CD8-positive, alpha-beta memory T cell (primary cell): ENCODE measurements at regions of chr17 and their contacts with region 1.

Region 1: GRCh38 chr17:66630379-66630778 is 204.5 kb upstream of the CACNG5 start:
- DNase-seq: no peak
- H3K4me3 ChIP-seq: no peak overlapping the region
- H3K4me3 Mint-ChIP-seq: no peak overlapping the region
- H3K27ac ChIP-seq: no peak overlapping the region
- H3K27ac Mint-ChIP-seq: no peak overlapping the region
- H3K4me1 ChIP-seq: peaks cover 22% of the 10 kb centered on the region
- H3K4me1 Mint-ChIP-seq: peaks cover 5 to 32% (median 15%) of the 10 kb centered on the region in 3 donors
- H3K27me3 ChIP-seq: no peaks in the 10 kb centered on the region
- H3K27me3 Mint-ChIP-seq: peaks cover 0 to 3% of the 10 kb centered on the region in 2 donors

Region 2: GRCh38 chr17:66466840-66467367 is 163.5 kb before region 1 on chr17:
- CTCF ChIA-PET with region 1: no interaction called
- POLR2A ChIA-PET with region 1: no interaction called
- DNase-seq: no peak
- H3K4me3 ChIP-seq: no peak overlapping the region
- H3K4me3 Mint-ChIP-seq: peak overlapping the region in 6 of 7 donors; percentile 37 to 66 (median 56)
- H3K27ac ChIP-seq: no peak overlapping the region
- H3K27ac Mint-ChIP-seq: peak overlapping the region in 3 of 8 donors; percentile 14 to 55 (median 38)
- H3K4me1 ChIP-seq: peaks cover 38% of the 10 kb centered on the region
- H3K4me1 Mint-ChIP-seq: peaks cover 40 to 67% (median 63%) of the 10 kb centered on the region in 3 donors
- H3K27me3 ChIP-seq: no peaks in the 10 kb centered on the region
- H3K27me3 Mint-ChIP-seq: peaks cover 0 to 2% of the 10 kb centered on the region in 2 donors

Region 3: DNA sequence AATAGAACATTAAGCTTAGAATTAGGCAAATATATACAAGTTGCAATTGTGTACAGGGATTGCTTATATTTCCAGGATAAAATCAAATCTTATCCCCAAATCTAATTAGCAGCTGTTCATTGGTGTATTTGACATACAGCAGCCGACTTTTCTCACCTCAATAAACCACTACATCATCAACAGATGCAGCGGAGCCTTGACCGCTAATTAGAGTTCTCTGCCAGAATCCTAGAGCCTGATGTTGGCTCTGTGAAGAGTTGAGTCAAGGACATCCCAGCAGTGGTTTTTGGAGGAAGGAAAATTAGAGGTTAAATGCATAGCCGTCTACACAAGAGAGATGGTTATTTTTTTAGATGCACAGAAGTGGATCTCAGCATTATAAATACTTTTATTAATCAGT is 17.4 kb before region 1 on chr17:
- CTCF ChIA-PET with region 1: no interaction called
- POLR2A ChIA-PET with region 1: no interaction called
- DNase-seq: no peak
- H3K4me3 ChIP-seq: no peak overlapping the region
- H3K4me3 Mint-ChIP-seq: no peak overlapping the region
- H3K27ac ChIP-seq: no peak overlapping the region
- H3K27ac Mint-ChIP-seq: no peak overlapping the region
- H3K4me1 ChIP-seq: no peaks in the 10 kb centered on the region
- H3K4me1 Mint-ChIP-seq: peaks cover 9 to 14% (median 14%) of the 10 kb centered on the region in 3 donors
- H3K27me3 ChIP-seq: no peaks in the 10 kb centered on the region
- H3K27me3 Mint-ChIP-seq: no peaks in the 10 kb centered on the region

Region 4: GRCh38 chr17:66713533-66714042 is 83.2 kb after region 1 on chr17:
- CTCF ChIA-PET with region 1: no interaction called
- POLR2A ChIA-PET with region 1: interaction called, 13 read pairs
- DNase-seq: peak in 2 of 5 donors; percentile 35 to 67
- H3K4me3 ChIP-seq: no peak overlapping the region
- H3K4me3 Mint-ChIP-seq: peak overlapping the region; percentile 1 to 79 (median 59)
- H3K27ac ChIP-seq: peak overlapping the region; percentile 4
- H3K27ac Mint-ChIP-seq: peak overlapping the region; percentile 74 to 96 (median 89)
- H3K4me1 ChIP-seq: peaks cover 23% of the 10 kb centered on the region
- H3K4me1 Mint-ChIP-seq: peaks cover 46 to 54% (median 53%) of the 10 kb centered on the region in 3 donors
- H3K27me3 ChIP-seq: no peaks in the 10 kb centered on the region
- H3K27me3 Mint-ChIP-seq: no peaks in the 10 kb centered on the region